ENCODE measurements at regions of chr20 and their contacts with region 1.

Region 1: GRCh38 chr20:31500527-31500926 is 13.7 kb upstream of the HM13 start:
- DNase-seq: no peak
- H3K4me3 Mint-ChIP-seq: no peak overlapping the region
- H3K27ac Mint-ChIP-seq: no peak overlapping the region
- H3K4me1 Mint-ChIP-seq: peaks cover 3% of the 10 kb centered on the region
- H3K27me3 Mint-ChIP-seq: peaks cover 6% of the 10 kb centered on the region

Region 2: GRCh38 chr20:31430568-31431115 is 69.9 kb before region 1 on chr20:
- CTCF ChIA-PET with region 1: no interaction called
- intact Hi-C with region 1: no loop called
- DNase-seq: no peak
- H3K4me3 Mint-ChIP-seq: no peak overlapping the region
- H3K27ac Mint-ChIP-seq: no peak overlapping the region
- H3K4me1 Mint-ChIP-seq: no peaks in the 10 kb centered on the region
- H3K27me3 Mint-ChIP-seq: peaks cover 7% of the 10 kb centered on the region

Region 3: GRCh38 chr20:31485450-31486339 is 14.8 kb before region 1 on chr20:
- CTCF ChIA-PET with region 1: interaction called, 60 read pairs
- intact Hi-C with region 1: no loop called
- DNase-seq: peak; percentile 12
- H3K4me3 Mint-ChIP-seq: no peak overlapping the region
- H3K27ac Mint-ChIP-seq: no peak overlapping the region
- H3K4me1 Mint-ChIP-seq: peaks cover 12% of the 10 kb centered on the region
- H3K27me3 Mint-ChIP-seq: peaks cover 26% of the 10 kb centered on the region